ENCODE measurements at regions of chr16 and their contacts with region 1.

Region 1: DNA sequence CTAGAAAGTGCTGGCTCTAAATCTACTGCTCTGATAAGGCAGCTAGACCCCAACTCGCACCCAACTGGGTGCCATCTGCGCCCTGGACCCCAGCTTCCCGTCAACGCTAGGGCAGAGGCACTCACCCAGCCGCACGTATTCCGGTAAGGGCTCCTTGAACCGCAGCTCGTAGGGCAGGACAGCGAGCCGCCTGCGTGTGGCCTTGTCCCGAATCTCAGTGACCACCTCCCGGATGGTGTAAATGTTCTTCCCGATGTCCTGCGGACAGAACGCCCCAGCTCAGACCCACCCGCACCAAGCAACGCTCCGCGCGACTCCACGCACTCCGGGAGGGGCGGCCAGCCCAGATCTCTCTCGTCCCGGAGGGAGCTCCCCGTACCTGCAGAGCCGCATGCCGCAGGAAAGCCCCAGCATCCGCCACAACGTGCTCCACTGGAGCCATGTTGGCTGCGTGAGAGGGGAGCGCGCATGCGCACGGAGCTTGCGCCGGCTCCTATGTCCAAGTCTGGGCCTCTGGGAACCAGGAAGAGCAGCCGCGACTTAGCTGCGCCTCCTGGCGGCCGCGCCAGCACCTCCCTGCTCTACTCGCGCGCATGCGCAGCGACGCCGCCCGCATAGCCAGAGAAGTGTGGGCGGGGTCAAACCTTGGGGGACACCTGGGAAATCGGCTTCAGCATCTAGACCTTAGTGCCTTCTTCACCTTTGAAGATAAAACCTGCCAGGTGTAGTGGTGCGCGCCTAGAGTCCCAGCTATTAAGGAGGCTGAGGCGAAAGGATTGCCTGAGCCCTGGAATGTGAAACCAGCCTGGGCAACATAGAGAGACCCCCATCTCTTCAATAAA is at the start of gene NOB1:
- DNase-seq: peak; percentile 98
- H3K4me3 ChIP-seq: peak within 1 kb of the TSS; percentile 39 to 87 (median 82)
- H3K27ac ChIP-seq: peak within 1 kb of the TSS; percentile 11
- H3K4me1 ChIP-seq: peaks cover 8% of the 10 kb centered on the region
- H3K27me3 ChIP-seq: no peaks in the 10 kb centered on the region
- CTCF ChIP-seq: peak; percentile 99 to 100
- POLR2A ChIP-seq: peak; percentile 97
- total RNA-seq, gene NOB1: 58.6 and 65.4 TPM in 2 replicates

Region 2: DNA sequence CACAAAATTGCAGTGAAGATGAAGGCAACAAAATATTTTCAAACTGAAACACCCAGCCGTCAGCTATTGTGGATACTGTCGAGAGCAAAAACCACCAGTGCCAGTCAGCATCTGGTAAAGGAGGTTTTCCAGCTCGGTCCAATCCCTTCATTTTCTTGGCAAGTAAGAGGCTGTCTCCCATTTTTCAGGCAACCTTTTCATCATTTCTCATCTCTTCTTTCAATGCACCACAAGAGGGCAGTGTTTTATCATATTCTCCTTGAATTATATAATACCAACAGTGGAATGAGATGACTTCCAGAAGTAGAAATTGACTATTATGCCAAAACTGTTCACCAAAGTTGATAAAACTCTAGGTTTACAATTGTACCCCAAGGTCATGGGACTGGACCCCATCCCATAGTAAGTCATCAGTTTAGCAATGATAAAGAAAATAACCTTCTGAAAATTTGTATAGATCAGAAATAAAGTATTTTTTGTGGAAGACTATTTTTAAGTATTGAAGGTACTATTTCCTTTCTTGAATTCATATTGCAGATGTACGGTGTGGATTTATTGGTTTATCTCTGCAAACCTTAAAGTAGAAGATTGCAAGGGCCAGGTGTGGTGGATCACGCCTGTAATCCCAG is 45.1 kb before region 1 on chr16:
- CTCF ChIA-PET with region 1: interaction called, 67 read pairs
- POLR2A ChIA-PET with region 1: interaction called, 4 read pairs
- dilution Hi-C with region 1: no loop called
- intact Hi-C with region 1: loop called (anchors 1 kb)
- DNase-seq: peak; percentile 71
- H3K4me3 ChIP-seq: no peak overlapping the region
- H3K27ac ChIP-seq: no peak overlapping the region
- H3K4me1 ChIP-seq: no peaks in the 10 kb centered on the region
- H3K27me3 ChIP-seq: no peaks in the 10 kb centered on the region
- CTCF ChIP-seq: peak; percentile 37 to 55
- POLR2A ChIP-seq: no peak

Region 3: DNA sequence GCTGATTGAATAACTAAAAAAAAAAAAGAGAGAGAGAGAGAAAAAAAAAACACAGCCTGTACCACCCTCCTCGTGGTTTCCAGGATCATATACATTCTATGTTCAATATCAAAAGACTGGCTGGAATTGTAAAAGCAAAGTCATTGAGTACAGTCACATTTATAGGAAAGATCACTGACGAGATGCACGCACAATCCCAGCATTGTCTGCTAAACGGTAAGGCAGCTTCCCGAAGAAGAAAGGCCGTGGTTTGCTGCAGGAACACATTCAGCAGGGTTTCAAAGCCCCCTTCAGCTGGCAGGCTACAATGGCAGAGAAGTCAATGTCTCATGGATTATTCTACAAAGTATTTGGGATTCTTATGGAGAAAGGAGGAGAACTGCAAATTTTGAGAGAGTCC is 37.6 kb before region 1 on chr16:
- CTCF ChIA-PET with region 1: interaction called, 67 read pairs
- POLR2A ChIA-PET with region 1: interaction called, 3 read pairs
- dilution Hi-C with region 1: no loop called
- intact Hi-C with region 1: no loop called
- DNase-seq: no peak
- H3K4me3 ChIP-seq: no peak overlapping the region
- H3K27ac ChIP-seq: no peak overlapping the region
- H3K4me1 ChIP-seq: no peaks in the 10 kb centered on the region
- H3K27me3 ChIP-seq: no peaks in the 10 kb centered on the region
- CTCF ChIP-seq: no peak
- POLR2A ChIP-seq: no peak

Region 4: DNA sequence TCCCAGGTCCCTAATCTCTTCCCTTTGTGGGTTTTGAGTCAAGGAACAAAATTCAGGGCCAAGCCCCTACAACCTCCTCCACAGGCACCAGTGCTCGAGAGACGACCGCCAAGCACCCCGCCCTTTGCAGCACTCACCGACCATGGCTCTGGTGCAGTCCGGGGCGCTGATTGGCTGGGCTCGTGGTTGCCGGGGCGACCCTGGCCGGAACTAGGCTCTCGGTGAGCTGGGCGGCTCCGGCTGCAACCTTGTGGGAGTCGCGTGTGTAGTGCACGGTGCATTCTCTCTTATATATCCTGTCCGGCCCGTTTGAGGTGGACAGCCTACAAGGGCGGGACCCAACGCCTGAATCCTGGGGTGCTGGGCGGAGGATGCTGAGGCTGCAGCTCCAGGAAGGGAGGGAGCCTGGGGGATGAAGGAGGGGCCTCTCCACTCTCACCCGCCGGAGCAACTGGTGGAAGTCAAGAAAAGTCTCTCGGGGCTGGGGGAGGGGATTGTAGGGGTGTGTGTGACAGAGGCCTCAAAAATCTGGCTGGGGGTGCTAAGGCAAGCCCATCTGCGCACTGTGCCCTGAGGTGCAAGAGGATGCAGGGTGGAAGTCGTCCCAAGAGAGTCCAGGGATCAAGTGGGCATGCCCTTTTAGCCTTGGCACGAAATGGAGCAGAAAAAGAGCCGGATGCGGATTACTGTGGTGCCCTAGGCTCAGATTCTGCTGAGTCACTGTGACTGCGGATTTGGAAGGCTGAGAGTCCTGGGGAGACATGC is 28.2 kb before region 1 on chr16 and contains the start of gene NQO1:
- CTCF ChIA-PET with region 1: interaction called, 55 read pairs
- POLR2A ChIA-PET with region 1: interaction called, 8 read pairs
- dilution Hi-C with region 1: no loop called
- intact Hi-C with region 1: loop called (anchors 1 kb)
- DNase-seq: peak; percentile 92
- H3K4me3 ChIP-seq: peak within 1 kb of the TSS; percentile 37 to 86 (median 70)
- H3K27ac ChIP-seq: peak within 1 kb of the TSS; percentile 72
- H3K4me1 ChIP-seq: peaks cover 36% of the 10 kb centered on the region
- H3K27me3 ChIP-seq: no peaks in the 10 kb centered on the region
- CTCF ChIP-seq: no peak
- POLR2A ChIP-seq: peak; percentile 91
- total RNA-seq, gene NQO1: 301 and 345 TPM in 2 replicates

Region 5: DNA sequence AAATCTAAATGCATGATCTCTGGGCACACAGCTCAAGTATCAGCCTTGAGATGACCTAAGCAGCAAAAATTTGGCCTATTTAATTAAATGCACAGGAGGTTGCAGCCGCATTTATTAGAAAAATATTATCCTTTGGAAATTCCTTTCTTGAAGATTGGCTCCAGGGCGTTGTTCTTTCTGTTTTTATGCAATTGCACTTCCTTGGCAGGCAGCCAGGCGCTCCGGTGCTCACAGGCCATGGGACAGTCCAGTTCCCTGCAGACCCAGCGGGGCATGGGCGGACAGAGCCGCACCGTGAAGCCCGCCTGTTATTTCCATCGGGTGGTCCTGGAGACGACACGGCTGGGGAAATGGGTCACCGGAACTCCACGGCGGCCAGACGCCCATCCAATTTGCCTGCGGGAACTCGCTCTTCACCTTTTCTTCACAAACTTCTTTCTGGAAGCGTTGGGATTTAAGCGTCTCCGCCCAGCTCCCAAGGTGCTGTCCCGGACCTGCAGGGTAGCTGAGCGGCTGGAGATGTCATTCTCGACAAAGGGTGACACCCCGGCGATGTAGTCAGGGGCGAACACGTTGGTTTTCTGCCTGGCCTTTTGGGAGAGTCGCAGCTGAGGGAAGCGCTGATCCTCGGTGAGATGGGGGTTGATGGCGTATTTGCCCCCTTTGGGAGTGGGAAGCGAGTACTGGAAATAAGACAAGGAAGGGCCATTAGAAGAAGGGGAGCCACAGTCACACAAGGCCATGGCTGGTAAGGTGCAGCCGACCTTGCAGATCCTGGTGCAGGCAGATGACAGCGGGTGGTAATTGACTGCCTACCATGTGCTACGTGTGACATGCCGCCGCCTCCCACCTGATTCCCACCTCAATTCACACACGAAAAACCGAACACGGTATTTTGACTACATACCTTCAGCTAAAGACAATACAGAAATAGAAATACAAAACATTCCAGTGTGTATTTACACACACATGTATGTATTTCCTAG is 12.5 kb before region 1 on chr16:
- CTCF ChIA-PET with region 1: interaction called, 10 read pairs
- POLR2A ChIA-PET with region 1: interaction called, 4 read pairs
- dilution Hi-C with region 1: no loop called
- intact Hi-C with region 1: no loop called
- DNase-seq: peak; percentile 73
- H3K4me3 ChIP-seq: no peak overlapping the region
- H3K27ac ChIP-seq: no peak overlapping the region
- H3K4me1 ChIP-seq: peaks cover 18% of the 10 kb centered on the region
- H3K27me3 ChIP-seq: no peaks in the 10 kb centered on the region
- CTCF ChIP-seq: no peak
- POLR2A ChIP-seq: no peak

Region 6: DNA sequence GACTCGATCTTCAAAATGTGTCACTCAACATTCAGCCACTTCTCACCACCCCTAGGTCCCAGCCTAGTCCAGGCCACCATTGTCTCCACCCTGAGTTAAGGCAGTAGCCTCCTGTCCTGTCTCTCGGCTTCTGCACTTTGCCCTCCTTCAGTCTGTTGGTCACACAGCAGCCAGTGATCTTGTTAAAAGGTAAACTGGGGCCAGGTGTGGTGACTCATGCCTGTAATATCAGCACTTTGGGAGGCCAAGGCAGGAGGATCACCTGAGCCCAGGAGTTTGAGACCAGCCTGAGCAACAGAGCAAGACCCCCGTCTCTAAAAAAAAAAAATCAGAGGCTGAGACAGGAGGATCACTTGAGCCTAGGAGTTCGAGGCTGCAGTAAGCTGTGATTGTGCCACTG is 33.2 kb after region 1 on chr16:
- CTCF ChIA-PET with region 1: no interaction called
- POLR2A ChIA-PET with region 1: interaction called, 10 read pairs
- dilution Hi-C with region 1: no loop called
- intact Hi-C with region 1: no loop called
- DNase-seq: no peak
- H3K4me3 ChIP-seq: no peak overlapping the region
- H3K27ac ChIP-seq: no peak overlapping the region
- H3K4me1 ChIP-seq: no peaks in the 10 kb centered on the region
- H3K27me3 ChIP-seq: no peaks in the 10 kb centered on the region
- CTCF ChIP-seq: no peak
- POLR2A ChIP-seq: no peak